A673 (cell line): ENCODE measurements at regions of chr11 and their contacts with region 1.

Region 1: GRCh38 chr11:91641153-91641552 is 583.5 kb upstream of the FAT3 start:
- DNase-seq: no peak
- H3K4me3 ChIP-seq: no peak overlapping the region
- H3K27ac ChIP-seq: no peak overlapping the region
- H3K4me1 ChIP-seq: no peaks in the 10 kb centered on the region
- H3K27me3 ChIP-seq: no peaks in the 10 kb centered on the region
- CTCF ChIP-seq: no peak

Region 2: GRCh38 chr11:91673705-91674104 is 32.6 kb after region 1 on chr11:
- CTCF ChIA-PET with region 1: interaction called, 11 read pairs
- POLR2A ChIA-PET with region 1: no interaction called
- intact Hi-C with region 1: no loop called
- DNase-seq: no peak
- H3K4me3 ChIP-seq: no peak overlapping the region
- H3K27ac ChIP-seq: no peak overlapping the region
- H3K4me1 ChIP-seq: no peaks in the 10 kb centered on the region
- H3K27me3 ChIP-seq: no peaks in the 10 kb centered on the region
- CTCF ChIP-seq: no peak